Naive thymus-derived CD4-positive, alpha-beta T cell (primary cell): ENCODE measurements at regions of chr6 and their contacts with region 1.

Region 1: GRCh38 chr6:29016559-29017427 is 11.7 kb upstream of the ZNF311 start:
- DNase-seq: peak; percentile 58 to 81 (median 76)
- ATAC-seq: peak; percentile 88
- H3K4me3 ChIP-seq: peak overlapping the region; percentile 87
- H3K4me3 Mint-ChIP-seq: peak overlapping the region; percentile 83 to 94 (median 92)
- H3K27ac ChIP-seq: peak overlapping the region; percentile 40
- H3K27ac Mint-ChIP-seq: peak overlapping the region; percentile 44 to 87 (median 82)
- H3K4me1 ChIP-seq: peaks cover 3 to 5% of the 10 kb centered on the region in 2 donors
- H3K4me1 Mint-ChIP-seq: peaks cover 13 to 22% (median 19%) of the 10 kb centered on the region in 7 donors
- H3K27me3 ChIP-seq: no peaks in the 10 kb centered on the region
- H3K27me3 Mint-ChIP-seq: peaks cover 4 to 33% (median 17%) of the 10 kb centered on the region in 5 donors

Region 2: GRCh38 chr6:28496099-28496779 is 520.6 kb before region 1 on chr6:
- CTCF ChIA-PET with region 1: interaction called, 5 read pairs
- POLR2A ChIA-PET with region 1: no interaction called
- intact Hi-C with region 1: loop called in 1 of 2 experiments (anchors 1 kb)
- DNase-seq: peak in 2 of 9 donors; percentile 17 to 25
- ATAC-seq: no peak
- H3K4me3 ChIP-seq: no peak overlapping the region
- H3K4me3 Mint-ChIP-seq: no peak overlapping the region
- H3K27ac ChIP-seq: no peak overlapping the region
- H3K27ac Mint-ChIP-seq: no peak overlapping the region
- H3K4me1 ChIP-seq: no peaks in the 10 kb centered on the region
- H3K4me1 Mint-ChIP-seq: peaks cover 0 to 8% (median 0%) of the 10 kb centered on the region in 7 donors
- H3K27me3 ChIP-seq: no peaks in the 10 kb centered on the region
- H3K27me3 Mint-ChIP-seq: peaks cover 9 to 52% (median 43%) of the 10 kb centered on the region in 5 donors

Region 3: DNA sequence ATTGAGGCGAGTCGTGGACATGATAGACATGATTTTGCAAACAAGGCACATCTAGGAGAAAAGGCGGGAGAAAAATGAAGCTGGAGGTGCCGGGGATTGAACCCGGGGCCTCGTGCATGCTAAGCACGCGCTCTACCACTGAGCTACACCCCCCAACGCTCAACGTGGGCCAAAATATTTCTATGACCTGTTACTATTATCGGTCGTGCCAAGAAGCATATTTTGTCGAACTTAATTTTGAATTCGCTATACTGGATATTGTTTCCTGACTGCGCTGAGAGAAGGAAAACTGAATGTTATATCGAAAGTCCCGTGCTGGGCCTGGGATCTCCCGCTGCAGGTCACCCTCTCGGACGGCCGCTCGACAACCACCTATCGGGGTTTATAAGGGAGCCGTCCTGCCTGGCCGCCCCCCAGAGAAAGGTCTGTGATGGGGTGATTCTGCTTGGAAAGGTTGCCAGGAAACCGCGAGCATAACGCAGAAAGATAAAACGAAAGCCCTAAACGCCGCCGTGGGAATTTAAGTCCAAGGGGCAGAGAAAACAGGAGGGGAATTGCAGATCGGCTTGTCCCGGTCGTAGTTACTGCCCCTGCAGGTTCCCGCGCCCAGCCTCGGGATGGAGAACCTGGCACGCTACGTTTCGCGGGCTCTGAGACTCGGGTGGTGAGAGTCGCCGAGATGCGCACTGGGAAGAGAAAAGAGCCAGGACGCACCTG is 153.0 kb before region 1 on chr6:
- CTCF ChIA-PET with region 1: interaction called, 3 read pairs
- POLR2A ChIA-PET with region 1: interaction called, 5 read pairs
- intact Hi-C with region 1: loop called (anchors 1 kb)
- DNase-seq: peak; percentile 60 to 93 (median 89)
- ATAC-seq: peak; percentile 64
- H3K4me3 ChIP-seq: peak overlapping the region; percentile 95
- H3K4me3 Mint-ChIP-seq: peak overlapping the region; percentile 90 to 98 (median 92)
- H3K27ac ChIP-seq: peak overlapping the region; percentile 75
- H3K27ac Mint-ChIP-seq: peak overlapping the region; percentile 89 to 100 (median 95)
- H3K4me1 ChIP-seq: peaks cover 11 to 18% of the 10 kb centered on the region in 2 donors
- H3K4me1 Mint-ChIP-seq: peaks cover 15 to 69% (median 53%) of the 10 kb centered on the region in 7 donors
- H3K27me3 ChIP-seq: no peaks in the 10 kb centered on the region
- H3K27me3 Mint-ChIP-seq: peaks cover 0 to 30% (median 4%) of the 10 kb centered on the region in 5 donors

Region 4: GRCh38 chr6:28906669-28907068 is 110.1 kb before region 1 on chr6:
- CTCF ChIA-PET with region 1: no interaction called
- POLR2A ChIA-PET with region 1: no interaction called
- intact Hi-C with region 1: no loop called
- DNase-seq: no peak
- ATAC-seq: peak; percentile 48
- H3K4me3 ChIP-seq: no peak overlapping the region
- H3K4me3 Mint-ChIP-seq: no peak overlapping the region
- H3K27ac ChIP-seq: no peak overlapping the region
- H3K27ac Mint-ChIP-seq: peak overlapping the region in 5 of 9 donors; percentile 7 to 65 (median 16)
- H3K4me1 ChIP-seq: no peaks in the 10 kb centered on the region
- H3K4me1 Mint-ChIP-seq: peaks cover 0 to 12% (median 3%) of the 10 kb centered on the region in 7 donors
- H3K27me3 ChIP-seq: no peaks in the 10 kb centered on the region
- H3K27me3 Mint-ChIP-seq: no peaks in the 10 kb centered on the region

Region 5: GRCh38 chr6:28923318-28924102 is 93.3 kb before region 1 on chr6 and contains the start of gene TRIM27:
- CTCF ChIA-PET with region 1: no interaction called
- POLR2A ChIA-PET with region 1: interaction called, 3 read pairs
- intact Hi-C with region 1: loop called in 1 of 2 experiments (anchors 1 kb)
- DNase-seq: peak; percentile 67 to 87 (median 80)
- ATAC-seq: peak; percentile 89
- H3K4me3 ChIP-seq: peak within 1 kb of the TSS; percentile 87
- H3K4me3 Mint-ChIP-seq: peak within 1 kb of the TSS; percentile 87 to 99 (median 95)
- H3K27ac ChIP-seq: peak within 1 kb of the TSS; percentile 86
- H3K27ac Mint-ChIP-seq: peak within 1 kb of the TSS; percentile 86 to 96 (median 92)
- H3K4me1 ChIP-seq: peaks cover 20 to 34% of the 10 kb centered on the region in 2 donors
- H3K4me1 Mint-ChIP-seq: peaks cover 28 to 52% (median 41%) of the 10 kb centered on the region in 7 donors
- H3K27me3 ChIP-seq: no peaks in the 10 kb centered on the region
- H3K27me3 Mint-ChIP-seq: no peaks in the 10 kb centered on the region
- total RNA-seq, gene TRIM27: 22.9 to 93.9 (median 67.5) TPM

Region 6: GRCh38 chr6:28988536-28989311 is 28.1 kb before region 1 on chr6:
- CTCF ChIA-PET with region 1: interaction called, 6 read pairs
- POLR2A ChIA-PET with region 1: interaction called, 3 read pairs
- intact Hi-C with region 1: loop called in 1 of 2 experiments (anchors 1 kb)
- DNase-seq: peak; percentile 57 to 77 (median 71)
- ATAC-seq: peak; percentile 93
- H3K4me3 ChIP-seq: peak overlapping the region; percentile 53
- H3K4me3 Mint-ChIP-seq: peak overlapping the region; percentile 79 to 88 (median 84)
- H3K27ac ChIP-seq: no peak overlapping the region
- H3K27ac Mint-ChIP-seq: peak overlapping the region in 7 of 9 donors; percentile 28 to 82 (median 32)
- H3K4me1 ChIP-seq: peaks cover 0 to 5% of the 10 kb centered on the region in 2 donors
- H3K4me1 Mint-ChIP-seq: peaks cover 7 to 38% (median 32%) of the 10 kb centered on the region in 7 donors
- H3K27me3 ChIP-seq: no peaks in the 10 kb centered on the region
- H3K27me3 Mint-ChIP-seq: peaks cover 0 to 53% (median 15%) of the 10 kb centered on the region in 5 donors

Region 7: GRCh38 chr6:29589423-29590048 is 572.7 kb after region 1 on chr6:
- CTCF ChIA-PET with region 1: interaction called, 3 read pairs
- POLR2A ChIA-PET with region 1: interaction called, 4 read pairs
- intact Hi-C with region 1: loop called (anchors 1 kb)
- DNase-seq: peak; percentile 14 to 62 (median 48)
- ATAC-seq: peak; percentile 80
- H3K4me3 ChIP-seq: no peak overlapping the region
- H3K4me3 Mint-ChIP-seq: no peak overlapping the region
- H3K27ac ChIP-seq: no peak overlapping the region
- H3K27ac Mint-ChIP-seq: no peak overlapping the region
- H3K4me1 ChIP-seq: no peaks in the 10 kb centered on the region
- H3K4me1 Mint-ChIP-seq: peaks cover 0 to 6% (median 0%) of the 10 kb centered on the region in 7 donors
- H3K27me3 ChIP-seq: peaks cover 0 to 5% of the 10 kb centered on the region in 2 donors
- H3K27me3 Mint-ChIP-seq: peaks cover 11 to 38% (median 28%) of the 10 kb centered on the region in 5 donors